Dendritic cell treated with granulocyte-macrophage colony-stimulating factor and Interleukin-4, amounts not matched to agents 40 ng/mL and 50 ng/mL, for 4 days (primary cell): ENCODE measurements at regions of chr20 and their contacts with region 1.

Region 1: GRCh38 chr20:40990542-40991120 is 38.0 kb upstream of the TOP1 start:
- H3K4me3 Mint-ChIP-seq: peak overlapping the region; percentile 28
- H3K27ac Mint-ChIP-seq: peak overlapping the region; percentile 91
- H3K4me1 Mint-ChIP-seq: peaks cover 25% of the 10 kb centered on the region
- H3K27me3 Mint-ChIP-seq: no peaks in the 10 kb centered on the region

Region 2: DNA sequence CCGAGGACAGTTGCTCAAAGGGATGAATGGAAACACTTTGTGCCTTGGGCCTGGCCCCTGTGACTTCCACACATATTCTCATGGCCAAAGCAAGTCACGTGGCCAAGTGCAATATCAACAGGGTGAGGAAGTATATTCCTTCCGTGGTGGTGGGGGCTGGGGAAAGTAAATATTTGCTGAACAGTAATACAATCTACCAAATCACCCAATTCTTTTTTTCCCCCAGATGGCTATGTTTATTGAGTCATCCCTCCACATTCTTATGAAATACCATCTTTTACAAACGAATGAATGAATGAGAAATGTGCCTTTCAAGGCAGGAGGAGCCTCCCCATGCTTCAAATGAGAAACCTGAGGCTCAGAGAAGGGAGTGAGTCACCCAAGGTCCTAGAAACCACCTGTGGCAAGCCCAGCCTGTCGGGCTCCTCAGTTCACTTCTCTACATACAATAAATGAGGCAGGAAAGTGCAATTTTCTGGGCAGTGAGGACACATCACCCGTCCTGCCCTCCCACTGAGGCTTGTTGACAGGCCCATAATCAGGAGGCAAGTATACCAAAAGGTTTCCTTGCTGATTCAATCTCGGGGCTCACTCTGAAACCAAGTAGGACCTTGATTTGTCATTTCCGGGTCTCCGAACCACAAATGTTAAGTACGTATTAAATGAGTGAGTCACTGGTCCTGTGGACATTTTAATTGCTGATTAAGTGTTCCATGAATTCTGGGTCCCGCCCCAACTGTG is 12.7 kb after region 1 on chr20:
- intact Hi-C with region 1: loop called (anchors 1 kb)
- H3K4me3 Mint-ChIP-seq: peak overlapping the region; percentile 17
- H3K27ac Mint-ChIP-seq: peak overlapping the region; percentile 82
- H3K4me1 Mint-ChIP-seq: peaks cover 63% of the 10 kb centered on the region
- H3K27me3 Mint-ChIP-seq: no peaks in the 10 kb centered on the region

Region 3: GRCh38 chr20:41028348-41029148 is 37.9 kb after region 1 on chr20 and contains the start of gene TOP1:
- intact Hi-C with region 1: loop called (anchors 1 kb)
- H3K4me3 Mint-ChIP-seq: peak within 1 kb of the TSS; percentile 90
- H3K27ac Mint-ChIP-seq: peak within 1 kb of the TSS; percentile 100
- H3K4me1 Mint-ChIP-seq: peaks cover 49% of the 10 kb centered on the region
- H3K27me3 Mint-ChIP-seq: no peaks in the 10 kb centered on the region

Region 4: GRCh38 chr20:41047975-41048305 is 57.3 kb after region 1 on chr20:
- intact Hi-C with region 1: loop called (anchors 5 kb)
- H3K4me3 Mint-ChIP-seq: peak overlapping the region; percentile 59
- H3K27ac Mint-ChIP-seq: peak overlapping the region; percentile 66
- H3K4me1 Mint-ChIP-seq: peaks cover 84% of the 10 kb centered on the region
- H3K27me3 Mint-ChIP-seq: no peaks in the 10 kb centered on the region

Region 5: DNA sequence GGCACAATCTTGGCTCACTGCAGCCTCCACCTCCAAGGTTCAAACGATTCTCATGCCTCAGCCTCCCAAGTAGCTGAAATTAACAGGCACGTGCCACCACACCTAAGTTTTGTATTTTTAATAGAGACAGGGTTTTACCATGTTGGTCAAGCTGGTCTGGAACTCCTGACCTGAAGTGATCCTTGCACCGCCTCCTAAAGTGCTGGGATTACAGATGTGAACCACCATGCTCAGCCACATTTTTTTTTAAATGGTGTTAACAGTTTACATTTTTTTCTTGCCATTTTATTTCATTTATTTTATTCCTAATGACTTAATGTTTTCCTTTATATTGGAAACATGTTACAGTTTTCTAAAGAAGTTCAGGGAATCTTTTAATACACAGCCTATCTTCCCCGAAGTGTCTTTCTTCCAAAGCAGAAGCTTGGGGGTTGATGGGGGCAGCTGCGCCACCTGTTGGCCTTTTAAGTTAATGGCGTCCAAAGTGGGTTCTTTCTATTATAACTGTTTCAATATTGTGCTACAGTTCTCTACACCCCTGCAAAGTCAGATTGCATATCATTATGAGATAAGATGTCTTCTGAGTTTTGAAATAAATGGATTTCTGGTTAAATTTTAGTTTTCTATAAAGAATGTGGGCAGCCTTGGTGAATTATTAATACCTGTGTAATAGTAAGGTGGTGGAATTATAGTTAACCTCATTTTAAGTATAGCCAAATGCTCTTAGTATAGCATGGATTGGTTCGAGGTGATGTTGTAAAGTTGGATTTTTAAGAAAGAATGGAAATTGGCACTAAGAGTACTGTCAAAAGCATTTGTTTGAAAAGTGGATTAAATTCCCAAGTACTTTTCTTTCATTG is 104.7 kb after region 1 on chr20:
- intact Hi-C with region 1: loop called (anchors 1 kb)
- H3K4me3 Mint-ChIP-seq: no peak overlapping the region
- H3K27ac Mint-ChIP-seq: no peak overlapping the region
- H3K4me1 Mint-ChIP-seq: no peaks in the 10 kb centered on the region
- H3K27me3 Mint-ChIP-seq: no peaks in the 10 kb centered on the region